ENCODE measurements at regions of chr19 and their contacts with region 1.

Region 1: GRCh38 chr19:12722566-12723380 is 959 bp downstream of the TNPO2 start:
- DNase-seq: peak; percentile 91
- H3K4me3 ChIP-seq: peak overlapping the region; percentile 80 to 93 (median 82)
- H3K27ac ChIP-seq: peak overlapping the region; percentile 87
- H3K4me1 ChIP-seq: peaks cover 0 to 6% (median 2%) of the 10 kb centered on the region in 4 experiments; a peak in 5 of 7 replicates
- H3K27me3 ChIP-seq: no peaks in the 10 kb centered on the region
- CTCF ChIP-seq: no peak
- EP300 ChIP-seq: no peak
- POLR2A ChIP-seq: peak; percentile 55 to 89
- RAD21 ChIP-seq: no peak

Region 2: DNA sequence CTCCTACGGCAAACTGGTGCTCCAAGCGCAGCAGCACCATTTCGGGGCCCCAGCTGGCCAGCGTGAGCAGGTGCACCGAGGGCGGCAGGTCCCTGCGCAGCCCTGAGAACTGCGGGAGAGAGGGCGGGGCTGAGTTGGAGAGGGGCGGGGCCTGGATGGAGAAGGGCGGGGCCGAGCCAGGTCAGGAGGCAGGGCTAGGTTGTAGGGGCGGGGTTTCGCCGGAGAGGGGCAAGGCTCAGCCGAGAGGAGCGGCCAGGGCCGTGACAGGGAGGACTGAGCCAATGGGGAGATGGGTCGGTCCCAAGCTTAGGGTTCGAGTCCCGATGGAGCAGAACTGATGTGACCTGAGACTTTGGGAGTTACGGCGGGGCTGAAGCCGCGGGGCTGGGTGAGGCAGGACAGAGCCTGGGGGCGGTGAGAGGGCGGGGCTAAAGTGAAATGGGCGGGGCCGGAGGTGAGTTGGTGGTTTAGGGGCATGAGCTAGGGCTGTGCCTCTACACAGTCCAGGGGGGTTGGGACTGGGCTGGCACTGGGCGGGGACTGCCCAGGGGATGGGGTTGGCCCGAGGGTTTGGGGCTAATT is 75.2 kb before region 1 on chr19:
- CTCF ChIA-PET with region 1: no interaction called
- POLR2A ChIA-PET with region 1: no interaction called
- DNase-seq: peak; percentile 80 to 86
- H3K4me3 ChIP-seq: peak overlapping the region in 1 of 4 experiments; percentile 40; a peak in 2 of 8 replicates
- H3K27ac ChIP-seq: no peak overlapping the region
- H3K4me1 ChIP-seq: no peaks in the 10 kb centered on the region
- H3K27me3 ChIP-seq: no peaks in the 10 kb centered on the region
- CTCF ChIP-seq: peak in 1 of 3 experiments; percentile 20; a peak in 1 of 4 replicates
- EP300 ChIP-seq: no peak
- POLR2A ChIP-seq: no peak
- RAD21 ChIP-seq: 0 out of 4 replicates have a peak, but pooled peaks of 1 of the 2 experiments have one; percentile 2

Region 3: DNA sequence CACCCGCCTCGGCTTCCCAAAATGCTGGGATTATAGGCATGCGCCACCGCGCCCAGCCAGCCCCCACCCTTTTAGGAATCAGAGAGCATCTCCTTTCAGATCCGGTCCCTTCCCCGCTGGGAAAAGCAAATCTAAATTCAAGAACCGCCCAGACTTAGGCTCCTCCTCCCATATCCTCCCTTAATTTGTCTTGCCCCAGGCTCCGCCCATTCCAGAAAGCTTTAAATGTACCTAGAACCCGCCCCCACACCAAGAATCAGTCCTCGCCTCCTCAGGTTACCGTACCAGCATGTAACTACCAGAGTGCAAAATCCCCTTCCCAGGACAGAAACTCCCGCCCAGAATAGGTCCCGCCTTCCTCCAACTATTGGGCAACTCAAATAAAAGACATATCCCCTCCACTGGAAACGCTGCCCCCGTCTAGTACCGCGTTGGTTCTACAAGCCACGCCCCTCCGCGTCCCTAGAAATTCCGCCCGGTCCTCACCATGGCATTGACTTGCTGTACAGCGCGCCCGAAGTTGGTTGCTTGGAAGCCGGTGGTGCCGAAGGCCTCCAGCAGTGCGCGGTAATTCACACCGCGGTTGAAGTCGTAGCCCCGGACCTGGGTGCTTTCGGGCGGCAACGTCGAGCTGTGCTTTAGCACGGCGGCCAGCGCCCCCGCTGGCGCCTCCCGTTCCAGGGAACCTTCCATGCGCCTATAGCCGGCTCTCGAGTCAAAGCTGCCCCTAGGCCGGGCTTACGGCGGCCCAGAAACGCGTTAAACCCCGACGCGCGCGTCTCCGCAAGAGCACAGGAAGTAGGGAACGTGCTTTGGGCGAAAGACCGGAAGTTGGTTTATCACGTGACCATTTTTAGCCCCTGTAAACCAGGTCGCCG is 41.5 kb before region 1 on chr19 and contains the start of gene DHPS:
- CTCF ChIA-PET with region 1: interaction called, 3 read pairs
- POLR2A ChIA-PET with region 1: interaction called, 22 read pairs
- DNase-seq: peak; percentile 85 to 96
- H3K4me3 ChIP-seq: peak within 1 kb of the TSS; percentile 81 to 99 (median 90)
- H3K27ac ChIP-seq: peak within 1 kb of the TSS; percentile 98
- H3K4me1 ChIP-seq: peaks cover 0 to 3% (median 0%) of the 10 kb centered on the region in 4 experiments; a peak in 2 of 7 replicates
- H3K27me3 ChIP-seq: no peaks in the 10 kb centered on the region
- CTCF ChIP-seq: no peak
- EP300 ChIP-seq: no peak
- POLR2A ChIP-seq: peak; percentile 63 to 96
- RAD21 ChIP-seq: no peak
- total RNA-seq, gene DHPS: 86.6 and 88.8 TPM in 2 replicates

Region 4: DNA sequence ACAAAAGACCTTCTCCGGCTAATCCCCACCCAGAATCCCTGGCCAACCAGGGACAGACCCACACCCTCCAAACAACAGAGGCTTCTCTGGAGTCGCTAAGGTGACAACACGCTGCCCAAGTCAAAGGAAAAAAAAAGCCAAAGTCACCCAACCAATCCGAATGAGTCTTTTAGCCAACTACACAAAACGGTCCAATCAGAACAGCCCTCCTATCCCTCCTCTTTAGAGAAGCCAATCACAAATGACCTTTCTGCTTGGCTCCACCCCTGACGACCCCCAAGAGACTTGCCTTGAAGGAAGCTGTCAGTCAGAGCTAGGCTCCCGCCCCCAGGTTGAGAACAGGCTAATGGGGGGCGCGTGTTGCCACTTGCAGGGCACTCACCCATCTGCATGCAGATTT is 19.7 kb before region 1 on chr19:
- CTCF ChIA-PET with region 1: interaction called, 5 read pairs
- POLR2A ChIA-PET with region 1: interaction called, 50 read pairs
- DNase-seq: peak; percentile 82 to 89
- H3K4me3 ChIP-seq: no peak overlapping the region
- H3K27ac ChIP-seq: peak overlapping the region; percentile 71; the same call in 1 of the 2 replicates
- H3K4me1 ChIP-seq: peaks cover 0 to 5% (median 2%) of the 10 kb centered on the region in 4 experiments; a peak in 2 of 7 replicates
- H3K27me3 ChIP-seq: no peaks in the 10 kb centered on the region
- CTCF ChIP-seq: no peak
- EP300 ChIP-seq: no peak
- POLR2A ChIP-seq: no peak
- RAD21 ChIP-seq: no peak

Region 5: DNA sequence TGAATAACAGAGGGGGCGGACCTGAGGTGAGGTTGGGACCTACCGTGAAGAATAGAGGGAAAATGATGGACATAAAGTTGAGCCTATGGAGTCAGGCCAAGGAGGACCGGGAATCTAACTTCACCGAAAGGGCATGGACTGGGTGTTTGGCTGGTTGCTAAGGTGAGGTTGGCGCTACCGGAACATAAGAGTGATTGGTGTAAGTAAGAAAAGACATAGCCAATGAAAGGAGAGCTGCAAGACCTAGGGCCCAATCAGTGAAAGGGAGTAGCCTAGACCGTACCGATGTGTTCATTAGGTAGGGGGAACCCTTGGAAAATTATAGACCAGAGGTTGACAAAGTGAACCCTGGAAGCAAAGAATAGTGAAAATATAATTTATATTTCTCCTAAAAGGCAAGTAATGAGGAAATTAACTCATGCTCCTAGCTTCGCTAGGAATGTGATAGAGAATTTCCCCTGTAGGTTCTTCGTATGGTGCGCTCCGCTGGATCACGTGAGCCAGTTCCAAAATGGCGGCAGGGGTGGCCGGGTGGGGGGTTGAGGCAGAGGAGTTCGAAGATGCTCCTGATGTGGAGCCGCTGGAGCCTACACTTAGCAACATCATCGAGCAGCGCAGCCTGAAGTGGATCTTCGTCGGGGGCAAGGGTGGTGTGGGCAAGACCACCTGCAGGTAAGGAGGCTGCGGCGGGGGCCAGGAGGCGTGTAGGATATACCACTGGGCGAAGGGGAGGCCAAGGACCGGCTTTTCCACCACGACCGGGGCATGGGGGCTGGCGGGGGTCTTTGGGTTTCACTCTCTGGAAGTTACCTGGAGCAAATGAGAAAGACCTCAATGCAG is 14.4 kb after region 1 on chr19 and contains the start of gene GET3:
- CTCF ChIA-PET with region 1: interaction called, 20 read pairs
- POLR2A ChIA-PET with region 1: interaction called, 258 read pairs
- DNase-seq: peak; percentile 87 to 97
- H3K4me3 ChIP-seq: peak within 1 kb of the TSS; percentile 65 to 91 (median 83)
- H3K27ac ChIP-seq: peak within 1 kb of the TSS; percentile 98
- H3K4me1 ChIP-seq: peaks cover 3 to 13% (median 7%) of the 10 kb centered on the region in 4 experiments
- H3K27me3 ChIP-seq: no peaks in the 10 kb centered on the region
- CTCF ChIP-seq: no peak
- EP300 ChIP-seq: peak in 1 of 2 experiments; percentile 99; a peak in 2 of 3 replicates
- POLR2A ChIP-seq: peak; percentile 80 to 83
- RAD21 ChIP-seq: no peak
- total RNA-seq, gene GET3: 105 and 106 TPM in 2 replicates

Region 6: GRCh38 chr19:12757544-12758274 is 34.9 kb after region 1 on chr19:
- CTCF ChIA-PET with region 1: interaction called, 81 read pairs
- POLR2A ChIA-PET with region 1: interaction called, 50 read pairs
- DNase-seq: peak; percentile 83 to 95
- H3K4me3 ChIP-seq: peak overlapping the region; percentile 12 to 59 (median 27); a peak in 6 of 8 replicates
- H3K27ac ChIP-seq: no peak overlapping the region
- H3K4me1 ChIP-seq: peaks cover 0 to 6% (median 2%) of the 10 kb centered on the region in 4 experiments; a peak in 3 of 7 replicates
- H3K27me3 ChIP-seq: no peaks in the 10 kb centered on the region; a peak in 1 of 7 replicates
- CTCF ChIP-seq: peak; percentile 90 to 94 (median 91)
- EP300 ChIP-seq: no peak; a peak in 1 of 3 replicates
- POLR2A ChIP-seq: peak in 1 of 2 experiments; percentile 59; a peak in 1 of 3 replicates
- RAD21 ChIP-seq: peak; percentile 52 to 63

Region 7: DNA sequence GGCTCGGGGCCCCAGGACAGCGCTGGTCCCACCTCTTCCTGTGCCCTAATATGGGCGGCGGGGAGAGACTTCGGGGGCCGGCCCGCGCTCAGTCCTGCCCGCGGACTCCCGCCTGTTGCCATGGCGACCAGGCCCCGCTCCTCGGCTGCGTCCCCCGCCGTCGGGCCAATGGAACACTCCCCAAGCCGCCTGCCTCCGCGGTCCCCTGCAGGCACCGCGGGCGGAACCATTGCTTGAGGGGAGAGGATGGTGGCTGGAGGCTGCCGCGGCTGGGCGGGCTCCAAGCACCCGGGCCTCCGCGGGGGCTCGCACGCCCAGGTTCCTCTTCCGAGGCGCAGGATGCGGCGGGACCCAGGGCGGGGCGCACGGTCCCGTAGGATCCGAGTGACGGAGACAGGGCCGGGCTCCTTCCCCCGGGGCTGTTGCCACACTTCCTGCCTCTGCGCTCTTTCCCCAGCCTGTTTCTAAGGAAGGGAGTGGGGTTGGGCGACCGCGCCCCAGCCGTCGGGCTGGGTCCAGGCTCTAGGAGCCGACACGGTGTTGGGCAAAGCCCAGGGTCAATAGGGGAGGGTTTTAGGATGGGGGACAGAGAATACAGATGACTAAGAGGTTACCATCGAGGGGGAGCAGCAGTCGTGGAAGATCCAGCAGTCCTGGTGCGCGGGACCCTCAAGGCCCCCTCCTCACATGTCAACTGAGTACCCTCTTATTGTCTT is 67.3 kb after region 1 on chr19:
- CTCF ChIA-PET with region 1: no interaction called
- POLR2A ChIA-PET with region 1: interaction called, 44 read pairs
- DNase-seq: peak; percentile 87 to 97
- H3K4me3 ChIP-seq: peak overlapping the region; percentile 36 to 71 (median 52)
- H3K27ac ChIP-seq: no peak overlapping the region; the same call in 1 of the 2 replicates
- H3K4me1 ChIP-seq: peaks cover 7 to 32% (median 22%) of the 10 kb centered on the region in 4 experiments
- H3K27me3 ChIP-seq: peaks cover 0 to 18% (median 13%) of the 10 kb centered on the region in 4 experiments; a peak in 5 of 7 replicates
- CTCF ChIP-seq: no peak
- EP300 ChIP-seq: peak in 1 of 2 experiments; percentile 100; a peak in 2 of 3 replicates
- POLR2A ChIP-seq: no peak
- RAD21 ChIP-seq: no peak

Region 8: GRCh38 chr19:12867120-12868099 is 144.6 kb after region 1 on chr19:
- CTCF ChIA-PET with region 1: no interaction called
- POLR2A ChIA-PET with region 1: no interaction called
- DNase-seq: peak; percentile 79 to 96
- H3K4me3 ChIP-seq: peak overlapping the region; percentile 34 to 65 (median 46)
- H3K27ac ChIP-seq: no peak overlapping the region
- H3K4me1 ChIP-seq: peaks cover 3 to 17% (median 14%) of the 10 kb centered on the region in 4 experiments
- H3K27me3 ChIP-seq: no peaks in the 10 kb centered on the region
- CTCF ChIP-seq: peak; percentile 0 to 31 (median 3); a peak in 2 of 4 replicates
- EP300 ChIP-seq: no peak
- POLR2A ChIP-seq: peak in 1 of 2 experiments; percentile 62; a peak in 1 of 3 replicates
- RAD21 ChIP-seq: peak in 1 of 2 experiments; percentile 4; a peak in 1 of 4 replicates